Activated CD4-positive, alpha-beta T cell treated with anti-CD3 and anti-CD28 coated beads, Interleukin-2, amount 10 ng/mL, durations not matched to agents 24 days and 14 days (primary cell): ENCODE measurements at regions of chr2 and their contacts with region 1.

Region 1: DNA sequence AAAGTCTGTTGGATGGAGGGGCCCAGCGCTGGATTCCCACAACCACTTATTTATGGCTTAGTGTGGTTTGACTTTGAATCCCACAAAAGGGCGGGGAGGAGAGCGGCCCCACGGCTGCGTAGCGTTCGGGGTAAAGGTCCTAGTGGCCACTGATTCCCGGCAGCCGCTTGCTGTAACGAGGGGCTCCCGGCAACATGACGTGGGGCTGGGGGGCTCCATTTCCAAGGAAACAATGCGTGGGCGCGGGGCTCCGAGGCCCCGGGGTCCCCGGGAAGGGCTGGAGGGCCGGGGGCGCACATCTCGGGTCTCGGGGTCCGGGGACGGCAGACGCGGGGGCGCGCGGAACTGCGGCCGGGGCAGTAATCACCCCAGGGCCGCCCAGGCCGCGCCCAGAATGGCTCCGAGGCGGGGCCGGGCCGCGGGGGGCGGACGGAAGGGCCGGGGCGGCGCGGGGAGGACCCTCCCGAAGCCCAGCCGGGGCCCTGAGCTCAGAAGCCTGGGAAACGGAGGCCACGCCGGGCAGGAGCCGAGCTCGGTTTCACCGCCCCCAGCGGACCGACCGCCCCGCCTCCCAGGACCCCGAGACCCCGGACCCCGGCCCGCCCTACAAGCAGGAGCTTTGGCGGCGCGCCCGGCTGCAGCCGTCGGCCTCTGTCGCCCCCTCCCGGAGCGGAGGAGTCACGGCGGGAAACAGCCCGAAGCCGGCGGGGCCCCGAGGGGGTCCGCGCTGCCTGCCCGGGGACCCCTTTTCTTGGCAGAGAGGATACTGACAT is 11.9 kb upstream of the MLPH start:
- DNase-seq: peak; percentile 94
- H3K4me3 Mint-ChIP-seq: peak overlapping the region; percentile 87
- H3K27ac Mint-ChIP-seq: peak overlapping the region; percentile 93
- H3K4me1 Mint-ChIP-seq: peaks cover 17% of the 10 kb centered on the region
- H3K27me3 Mint-ChIP-seq: peaks cover 30% of the 10 kb centered on the region

Region 2: GRCh38 chr2:237291138-237291792 is 183.9 kb before region 1 on chr2:
- intact Hi-C with region 1: loop called (anchors 10 kb)
- DNase-seq: peak; percentile 58
- H3K4me3 Mint-ChIP-seq: peak overlapping the region; percentile 16
- H3K27ac Mint-ChIP-seq: peak overlapping the region; percentile 60
- H3K4me1 Mint-ChIP-seq: peaks cover 4% of the 10 kb centered on the region
- H3K27me3 Mint-ChIP-seq: peaks cover 27% of the 10 kb centered on the region

Region 3: GRCh38 chr2:237421542-237422116 is 53.5 kb before region 1 on chr2:
- intact Hi-C with region 1: loop called (anchors 1 kb)
- DNase-seq: peak; percentile 93
- H3K4me3 Mint-ChIP-seq: peak overlapping the region; percentile 74
- H3K27ac Mint-ChIP-seq: peak overlapping the region; percentile 75
- H3K4me1 Mint-ChIP-seq: peaks cover 31% of the 10 kb centered on the region
- H3K27me3 Mint-ChIP-seq: peaks cover 5% of the 10 kb centered on the region

Region 4: GRCh38 chr2:237427769-237428506 is 47.2 kb before region 1 on chr2:
- intact Hi-C with region 1: loop called (anchors 2 kb)
- DNase-seq: peak; percentile 84
- H3K4me3 Mint-ChIP-seq: peak overlapping the region; percentile 73
- H3K27ac Mint-ChIP-seq: peak overlapping the region; percentile 95
- H3K4me1 Mint-ChIP-seq: peaks cover 76% of the 10 kb centered on the region
- H3K27me3 Mint-ChIP-seq: no peaks in the 10 kb centered on the region

Region 5: DNA sequence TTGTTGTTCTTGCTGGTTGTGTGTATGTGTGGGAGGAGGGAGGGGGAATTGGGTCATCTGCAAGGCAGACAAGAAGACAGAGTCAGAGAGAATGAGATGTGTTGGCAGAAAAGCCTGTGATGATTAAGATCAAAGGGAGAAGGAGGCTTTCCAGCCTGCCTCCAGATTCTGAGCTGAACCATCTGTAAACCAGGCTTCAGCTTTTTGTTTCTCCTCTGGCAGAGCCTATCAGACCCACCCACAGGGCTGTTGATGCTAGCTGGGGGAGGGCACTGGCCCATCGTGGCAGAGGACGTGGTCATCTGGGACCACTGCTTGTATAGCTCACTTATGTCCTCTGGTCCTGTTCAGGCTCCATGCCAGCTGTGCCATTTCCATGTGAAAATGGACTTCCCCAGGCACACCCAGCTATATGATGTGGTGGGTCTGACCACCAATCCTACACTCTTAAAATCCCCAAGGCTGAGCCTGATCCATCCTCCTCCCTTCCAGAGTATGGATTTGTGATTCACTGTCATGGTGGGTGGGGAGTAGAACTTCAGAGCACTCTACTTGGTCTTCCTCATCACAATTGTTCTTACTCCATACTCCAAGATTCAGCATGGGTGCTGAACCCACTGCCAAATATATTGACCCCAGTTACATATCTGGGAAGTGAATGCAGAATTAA is 33.4 kb before region 1 on chr2:
- intact Hi-C with region 1: loop called (anchors 1 kb)
- DNase-seq: peak; percentile 72
- H3K4me3 Mint-ChIP-seq: peak overlapping the region; percentile 49
- H3K27ac Mint-ChIP-seq: peak overlapping the region; percentile 86
- H3K4me1 Mint-ChIP-seq: peaks cover 52% of the 10 kb centered on the region
- H3K27me3 Mint-ChIP-seq: no peaks in the 10 kb centered on the region

Region 6: DNA sequence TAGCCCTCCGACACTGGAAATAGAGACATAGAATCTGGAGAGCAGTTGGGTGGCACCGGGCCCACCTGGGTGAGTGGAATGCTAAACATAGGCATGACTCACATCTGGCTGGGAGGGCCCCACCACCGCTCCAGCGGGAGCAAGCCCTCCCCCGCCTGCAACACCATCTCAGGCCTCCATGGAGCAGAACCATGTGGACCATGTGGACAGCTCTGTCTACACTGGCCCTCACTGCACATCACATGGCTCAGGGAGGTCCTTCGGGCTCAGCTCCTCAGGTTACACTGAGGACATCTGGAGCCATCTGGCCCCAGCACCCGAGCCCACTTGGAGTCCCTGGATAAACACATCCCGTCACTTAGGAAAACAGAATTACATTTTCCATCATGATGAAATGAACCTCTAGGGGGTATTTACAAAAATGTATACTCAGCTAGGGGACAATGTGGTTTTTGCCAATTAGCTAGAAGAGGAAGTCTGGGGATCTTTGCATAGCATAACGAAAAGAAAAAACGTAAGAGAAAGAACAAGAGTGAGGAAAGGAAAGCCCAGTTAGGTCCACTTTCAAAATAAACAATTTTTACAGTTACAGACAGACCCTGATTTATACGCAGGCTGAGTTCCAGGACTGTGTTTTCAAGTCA is 18.8 kb before region 1 on chr2:
- intact Hi-C with region 1: loop called (anchors 2 kb)
- DNase-seq: no peak
- H3K4me3 Mint-ChIP-seq: no peak overlapping the region
- H3K27ac Mint-ChIP-seq: no peak overlapping the region
- H3K4me1 Mint-ChIP-seq: peaks cover 29% of the 10 kb centered on the region
- H3K27me3 Mint-ChIP-seq: no peaks in the 10 kb centered on the region

Region 7: DNA sequence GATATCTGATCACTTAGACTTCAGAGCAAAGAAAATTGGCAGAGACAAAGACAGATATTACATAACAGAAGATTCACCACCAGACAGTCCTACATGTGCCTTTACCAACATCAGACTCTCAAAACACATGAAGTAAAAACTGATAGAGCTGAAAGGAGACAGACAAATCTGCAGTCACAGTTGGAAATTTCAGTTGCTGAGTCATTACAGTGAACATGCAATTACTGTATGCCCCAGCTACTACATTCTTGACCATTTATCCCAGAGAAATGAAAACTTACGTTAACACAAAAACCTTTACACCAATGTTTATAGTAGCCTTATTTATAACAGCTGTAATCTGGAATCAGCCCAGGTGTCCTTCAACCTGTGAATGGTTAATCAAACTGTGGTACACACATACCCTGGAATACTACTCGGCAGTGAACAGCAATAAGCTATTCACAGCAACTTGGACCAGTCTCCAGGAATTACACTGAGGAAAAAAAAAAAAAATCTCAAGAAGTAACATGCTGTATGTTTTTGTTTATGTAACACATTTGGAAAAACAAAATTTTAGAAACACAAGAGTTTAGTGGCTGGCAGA is 578.2 kb after region 1 on chr2:
- intact Hi-C with region 1: no loop called
- DNase-seq: no peak
- H3K4me3 Mint-ChIP-seq: no peak overlapping the region
- H3K27ac Mint-ChIP-seq: no peak overlapping the region
- H3K4me1 Mint-ChIP-seq: peaks cover 5% of the 10 kb centered on the region
- H3K27me3 Mint-ChIP-seq: peaks cover 8% of the 10 kb centered on the region

Region 8: GRCh38 chr2:238509151-238509835 is 1034.2 kb after region 1 on chr2:
- intact Hi-C with region 1: no loop called
- DNase-seq: no peak
- H3K4me3 Mint-ChIP-seq: no peak overlapping the region
- H3K27ac Mint-ChIP-seq: no peak overlapping the region
- H3K4me1 Mint-ChIP-seq: no peaks in the 10 kb centered on the region
- H3K27me3 Mint-ChIP-seq: peaks cover 2% of the 10 kb centered on the region